ENCODE measurements at regions of chr13 and their contacts with region 1.

Region 1: GRCh38 chr13:90594694-90595093 is 752.8 kb upstream of the MIR17HG start:
- DNase-seq: no peak
- ATAC-seq: no peak
- H3K4me3 ChIP-seq: no peak overlapping the region
- H3K27ac ChIP-seq: no peak overlapping the region
- H3K4me1 ChIP-seq: no peaks in the 10 kb centered on the region
- H3K27me3 ChIP-seq: no peaks in the 10 kb centered on the region
- CTCF ChIP-seq: no peak
- EP300 ChIP-seq: no peak
- POLR2A ChIP-seq: no peak
- RAD21 ChIP-seq: no peak

Region 2: DNA sequence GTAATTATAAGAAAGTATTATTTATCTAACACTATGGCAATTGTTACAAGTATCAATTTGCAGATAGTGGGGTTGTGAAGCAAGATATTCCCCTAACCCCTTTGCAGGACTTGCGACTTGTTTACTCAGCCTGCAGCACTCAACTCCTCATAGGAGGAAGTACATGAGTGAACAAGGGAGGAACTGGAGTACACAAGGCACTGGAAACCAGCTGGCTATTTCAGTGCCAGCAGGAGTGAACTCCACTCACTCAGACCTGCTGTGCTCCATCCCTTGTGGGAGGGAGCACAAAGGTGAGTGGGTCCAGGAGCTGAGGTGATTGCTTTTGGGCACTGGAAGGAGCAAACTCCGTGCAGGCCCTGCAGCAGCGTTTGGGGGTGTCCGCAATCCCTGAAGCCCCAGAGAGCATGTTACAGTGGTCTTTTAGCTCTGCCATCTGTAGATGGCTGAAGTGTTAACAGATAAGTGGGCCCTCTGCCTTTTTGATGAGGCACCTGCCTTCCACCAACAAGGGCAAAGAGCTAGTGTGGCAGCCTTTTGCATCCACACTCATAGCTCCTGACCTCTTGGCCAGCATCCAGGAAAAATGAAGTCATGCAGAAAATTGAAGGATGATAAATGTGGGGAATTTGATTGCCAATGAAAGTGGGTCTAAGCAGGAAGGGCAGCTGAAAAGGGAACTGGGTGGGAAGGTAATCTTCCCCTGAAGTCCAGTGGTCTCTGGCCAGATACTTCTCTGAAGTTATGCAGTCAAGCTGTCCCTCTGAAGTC is 49.4 kb before region 1 on chr13:
- CTCF ChIA-PET with region 1: no interaction called
- POLR2A ChIA-PET with region 1: no interaction called
- RAD21 ChIA-PET with region 1: no interaction called
- SMC1A ChIA-PET with region 1: no interaction called
- in situ Hi-C with region 1: no loop called
- intact Hi-C with region 1: no loop called
- DNase-seq: no peak
- ATAC-seq: no peak
- H3K4me3 ChIP-seq: no peak overlapping the region
- H3K27ac ChIP-seq: no peak overlapping the region
- H3K4me1 ChIP-seq: no peaks in the 10 kb centered on the region
- H3K27me3 ChIP-seq: no peaks in the 10 kb centered on the region
- CTCF ChIP-seq: no peak
- EP300 ChIP-seq: no peak
- POLR2A ChIP-seq: no peak
- RAD21 ChIP-seq: no peak

Region 3: DNA sequence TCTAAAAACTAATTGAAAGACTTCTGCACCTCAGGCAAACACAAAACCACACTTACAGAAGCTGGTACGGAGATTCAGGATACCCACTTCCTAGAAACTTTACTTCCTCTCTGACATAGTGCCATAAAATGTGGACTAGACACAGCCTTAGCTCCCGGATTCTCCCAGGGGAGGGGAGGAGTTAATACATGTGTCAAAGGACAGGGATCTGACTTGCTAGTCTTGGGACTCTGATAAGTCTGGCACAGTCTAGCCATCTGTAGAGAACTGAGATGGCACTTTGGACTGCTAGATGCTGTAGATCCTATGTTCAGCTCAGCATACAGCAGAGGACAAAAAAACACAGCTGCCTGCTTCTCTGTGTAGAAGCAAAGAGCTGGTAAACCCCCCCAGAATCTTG is 17.0 kb before region 1 on chr13:
- CTCF ChIA-PET with region 1: no interaction called
- POLR2A ChIA-PET with region 1: no interaction called
- RAD21 ChIA-PET with region 1: no interaction called
- SMC1A ChIA-PET with region 1: no interaction called
- in situ Hi-C with region 1: no loop called
- intact Hi-C with region 1: no loop called
- DNase-seq: no peak
- ATAC-seq: peak; percentile 49
- H3K4me3 ChIP-seq: no peak overlapping the region
- H3K27ac ChIP-seq: no peak overlapping the region
- H3K4me1 ChIP-seq: no peaks in the 10 kb centered on the region
- H3K27me3 ChIP-seq: no peaks in the 10 kb centered on the region
- CTCF ChIP-seq: no peak
- EP300 ChIP-seq: no peak
- POLR2A ChIP-seq: no peak
- RAD21 ChIP-seq: no peak

Region 4: DNA sequence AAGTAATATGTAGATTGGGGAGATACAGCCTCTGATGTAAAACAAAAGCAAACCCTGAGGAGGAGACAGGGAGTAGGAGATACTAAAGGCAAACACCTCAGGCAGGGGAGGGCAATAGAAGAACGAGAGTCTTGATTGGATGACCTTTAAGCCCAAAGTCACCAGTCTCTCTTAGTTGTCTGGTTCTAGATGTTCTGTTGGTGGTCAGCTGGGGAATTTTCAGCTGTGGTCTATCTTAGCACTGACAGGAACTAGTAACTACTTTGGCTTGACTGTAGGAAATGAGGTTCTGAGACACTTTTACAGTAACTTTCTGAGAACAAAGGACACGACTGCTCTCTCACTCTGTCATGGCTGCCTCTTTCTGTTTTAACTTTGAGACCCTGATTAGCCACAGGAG is 462.1 kb after region 1 on chr13:
- CTCF ChIA-PET with region 1: no interaction called
- POLR2A ChIA-PET with region 1: no interaction called
- RAD21 ChIA-PET with region 1: no interaction called
- SMC1A ChIA-PET with region 1: interaction called, 3 read pairs
- in situ Hi-C with region 1: no loop called
- intact Hi-C with region 1: loop called (anchors 10 kb)
- DNase-seq: peak; percentile 57
- ATAC-seq: peak; percentile 95
- H3K4me3 ChIP-seq: no peak overlapping the region
- H3K27ac ChIP-seq: peak overlapping the region; percentile 58; the same call in 1 of the 2 replicates
- H3K4me1 ChIP-seq: no peaks in the 10 kb centered on the region
- H3K27me3 ChIP-seq: no peaks in the 10 kb centered on the region
- CTCF ChIP-seq: no peak
- EP300 ChIP-seq: peak; percentile 30 to 33; a peak in 1 of 4 replicates
- POLR2A ChIP-seq: no peak
- RAD21 ChIP-seq: no peak

Measured in GM12878 (cell line).